Thyroid gland (tissue), 4 donors: ENCODE measurements at regions of chr22 and their contacts with region 1.

Region 1: DNA sequence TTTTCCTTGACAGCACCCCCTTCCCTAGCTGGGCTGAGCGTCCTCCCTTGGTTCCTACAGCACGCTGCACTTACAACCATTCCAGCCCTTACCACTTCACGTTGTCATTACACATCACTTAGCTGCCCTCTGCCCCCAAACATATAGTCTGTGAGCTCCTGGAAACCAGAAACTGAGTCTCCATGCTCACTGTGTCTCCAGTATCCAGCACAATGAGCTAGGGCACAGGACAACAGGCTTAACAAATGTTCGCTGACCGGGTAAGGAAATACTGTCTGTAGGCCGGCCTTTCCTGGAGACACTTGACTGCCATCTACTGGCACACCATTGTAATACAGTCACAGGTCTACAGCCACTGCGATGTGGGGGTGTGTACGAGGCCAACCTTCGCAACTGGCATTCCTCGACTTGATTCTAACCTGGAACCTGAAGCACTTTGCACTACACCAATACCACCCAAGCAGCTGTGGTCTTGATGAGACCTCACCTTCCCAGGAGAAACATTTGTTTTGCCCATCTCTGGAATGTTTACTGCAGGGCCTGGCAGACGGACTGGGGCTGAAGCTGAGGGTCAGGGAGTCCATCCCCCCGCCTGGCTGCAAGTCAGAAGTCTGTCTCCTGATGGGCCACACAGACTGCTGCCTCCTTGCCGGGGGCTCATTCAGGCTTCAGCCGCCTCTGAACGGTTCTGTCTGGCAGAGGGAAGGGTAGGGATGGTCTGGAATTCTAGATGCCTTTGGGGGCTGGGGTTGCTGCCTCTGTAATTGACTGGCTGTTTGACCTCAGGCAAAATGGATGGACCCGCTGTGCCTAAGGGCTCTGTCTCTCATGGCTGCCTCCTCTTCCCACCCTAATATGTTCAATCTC is 72.0 kb downstream of the SYN3 start:
- DNase-seq: peak; percentile 74 to 75
- H3K4me3 ChIP-seq: no peak overlapping the region
- H3K27ac ChIP-seq: no peak overlapping the region
- H3K4me1 ChIP-seq: peaks cover 3 to 4% of the 10 kb centered on the region in 2 donors
- H3K27me3 ChIP-seq: no peaks in the 10 kb centered on the region
- CTCF ChIP-seq: peak; percentile 79 to 95 (median 90)
- POLR2A ChIP-seq: no peak

Region 2: DNA sequence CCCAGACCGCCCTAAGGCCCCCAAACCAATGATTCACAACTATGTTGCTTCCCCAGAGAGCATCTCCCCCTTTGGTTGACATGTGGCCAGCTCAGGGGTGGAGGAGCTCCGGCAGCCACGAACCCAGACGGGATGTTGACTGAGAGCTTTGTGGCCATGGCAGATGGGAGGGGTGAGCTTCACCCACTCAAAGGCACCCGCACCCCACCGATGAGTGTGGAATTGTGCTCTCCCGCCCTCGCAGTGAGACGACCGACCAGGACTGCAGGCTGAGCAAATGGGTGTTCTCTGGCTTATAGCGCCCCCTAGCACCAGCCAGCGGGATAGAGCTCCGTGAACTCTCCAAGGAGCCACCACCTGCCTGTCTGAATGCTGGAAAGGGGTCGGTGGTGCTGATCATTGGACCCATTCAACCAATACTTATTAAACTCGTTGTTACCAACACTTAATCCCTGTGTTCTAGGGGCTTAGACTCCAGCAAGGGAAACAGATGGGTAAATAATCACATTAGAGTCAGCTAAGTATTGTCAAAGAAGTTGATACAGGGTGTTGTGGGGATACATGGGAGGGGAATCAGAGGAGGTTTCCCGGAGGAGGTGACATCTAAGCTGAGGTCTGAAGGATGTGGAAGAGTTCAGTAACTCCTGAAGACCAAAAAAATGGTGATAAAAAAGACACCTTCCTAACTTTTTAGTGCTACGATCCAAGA is 189.1 kb before region 1 on chr22:
- intact Hi-C with region 1: loop called (anchors 10 kb)
- DNase-seq: peak; percentile 66 to 70
- H3K4me3 ChIP-seq: no peak overlapping the region
- H3K27ac ChIP-seq: no peak overlapping the region
- H3K4me1 ChIP-seq: peaks cover 6 to 16% of the 10 kb centered on the region in 2 donors
- H3K27me3 ChIP-seq: no peaks in the 10 kb centered on the region
- CTCF ChIP-seq: peak; percentile 69 to 92 (median 83)
- POLR2A ChIP-seq: no peak

Region 3: GRCh38 chr22:32823024-32823730 is 163.0 kb before region 1 on chr22:
- intact Hi-C with region 1: no loop called
- DNase-seq: peak; percentile 55 to 64
- H3K4me3 ChIP-seq: no peak overlapping the region
- H3K27ac ChIP-seq: peak overlapping the region in 1 of 3 donors; percentile 27
- H3K4me1 ChIP-seq: peaks cover 26 to 68% of the 10 kb centered on the region in 2 donors
- H3K27me3 ChIP-seq: no peaks in the 10 kb centered on the region
- CTCF ChIP-seq: peak in 5 of 6 experiments; percentile 12 to 51 (median 41)
- POLR2A ChIP-seq: no peak

Region 4: GRCh38 chr22:32926600-32926999 is 59.5 kb before region 1 on chr22:
- intact Hi-C with region 1: loop called (anchors 10 kb)
- DNase-seq: peak in 1 of 2 donors; percentile 19
- H3K4me3 ChIP-seq: no peak overlapping the region
- H3K27ac ChIP-seq: no peak overlapping the region
- H3K4me1 ChIP-seq: no peaks in the 10 kb centered on the region
- H3K27me3 ChIP-seq: no peaks in the 10 kb centered on the region
- CTCF ChIP-seq: peak; percentile 23 to 63 (median 42)
- POLR2A ChIP-seq: no peak

Region 5: GRCh38 chr22:33049119-33049729 is 63.1 kb after region 1 on chr22:
- intact Hi-C with region 1: no loop called
- DNase-seq: peak; percentile 74 to 78
- H3K4me3 ChIP-seq: no peak overlapping the region
- H3K27ac ChIP-seq: no peak overlapping the region
- H3K4me1 ChIP-seq: no peaks in the 10 kb centered on the region
- H3K27me3 ChIP-seq: peaks cover 6% of the 10 kb centered on the region
- CTCF ChIP-seq: peak; percentile 53 to 93 (median 68)
- POLR2A ChIP-seq: no peak